Ascending aorta (tissue), 2 donors: ENCODE measurements at regions of chr1 and their contacts with region 1.

Region 1: DNA sequence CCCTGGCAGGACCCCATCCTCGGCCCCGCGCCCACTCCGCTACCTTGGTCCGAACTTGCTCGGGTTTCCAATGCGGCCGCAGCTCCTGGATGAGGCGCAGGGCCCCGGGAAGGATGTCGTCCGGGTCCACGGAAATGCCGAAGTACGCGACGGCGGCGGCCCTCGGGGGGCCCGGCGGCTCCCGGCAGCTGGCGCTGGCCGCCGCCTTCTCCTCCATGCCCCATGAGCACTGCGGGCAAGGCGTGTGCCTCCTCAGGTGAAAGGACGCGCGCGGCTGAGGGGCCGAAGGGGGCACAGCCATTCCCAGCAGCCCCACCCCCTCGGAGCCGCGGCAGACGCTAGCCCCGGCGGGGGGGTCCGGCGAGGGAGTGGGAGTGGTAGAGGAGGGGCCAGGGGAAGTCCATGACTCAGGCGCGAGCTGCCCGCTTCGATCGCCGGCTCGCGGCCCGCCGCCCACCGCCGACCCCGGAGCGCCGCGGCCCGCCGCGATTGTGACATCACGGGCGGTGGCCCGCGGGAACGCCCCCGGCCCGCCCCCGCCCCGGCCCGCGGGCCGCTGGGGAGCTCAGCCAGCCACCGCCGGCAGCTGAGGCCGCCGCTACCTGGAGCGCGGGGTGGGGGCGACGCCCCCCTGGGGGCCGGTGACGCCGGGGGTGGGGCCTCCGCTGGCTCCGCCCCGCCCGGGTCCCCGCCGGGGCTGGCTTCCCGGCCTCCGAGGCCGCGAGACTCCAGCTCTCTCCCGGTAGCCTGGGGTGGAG is at the start of gene ETNK2:
- DNase-seq: peak; percentile 35 to 87
- H3K4me3 ChIP-seq: peak within 1 kb of the TSS; percentile 89 to 90
- H3K27ac ChIP-seq: peak within 1 kb of the TSS; percentile 88 to 94
- H3K4me1 ChIP-seq: peaks cover 0 to 8% of the 10 kb centered on the region in 2 donors
- H3K27me3 ChIP-seq: no peaks in the 10 kb centered on the region
- CTCF ChIP-seq: no peak
- total RNA-seq, gene ETNK2: 22.0 TPM

Region 2: GRCh38 chr1:204080163-204080903 is 71.4 kb before region 1 on chr1:
- intact Hi-C with region 1: loop called (anchors 2 kb)
- DNase-seq: peak; percentile 56 to 95
- H3K4me3 ChIP-seq: peak overlapping the region; percentile 7 to 24
- H3K27ac ChIP-seq: peak overlapping the region; percentile 69 to 86
- H3K4me1 ChIP-seq: peaks cover 17 to 64% of the 10 kb centered on the region in 2 donors
- H3K27me3 ChIP-seq: no peaks in the 10 kb centered on the region
- CTCF ChIP-seq: no peak

Region 3: GRCh38 chr1:204128964-204129896 is 22.5 kb before region 1 on chr1:
- intact Hi-C with region 1: loop called (anchors 2 kb)
- DNase-seq: peak in 1 of 2 donors; percentile 79
- H3K4me3 ChIP-seq: peak overlapping the region; percentile 46 to 49
- H3K27ac ChIP-seq: peak overlapping the region; percentile 25 to 58
- H3K4me1 ChIP-seq: peaks cover 0 to 23% of the 10 kb centered on the region in 2 donors
- H3K27me3 ChIP-seq: no peaks in the 10 kb centered on the region
- CTCF ChIP-seq: peak; percentile 91 to 92 (median 91)

Region 4: DNA sequence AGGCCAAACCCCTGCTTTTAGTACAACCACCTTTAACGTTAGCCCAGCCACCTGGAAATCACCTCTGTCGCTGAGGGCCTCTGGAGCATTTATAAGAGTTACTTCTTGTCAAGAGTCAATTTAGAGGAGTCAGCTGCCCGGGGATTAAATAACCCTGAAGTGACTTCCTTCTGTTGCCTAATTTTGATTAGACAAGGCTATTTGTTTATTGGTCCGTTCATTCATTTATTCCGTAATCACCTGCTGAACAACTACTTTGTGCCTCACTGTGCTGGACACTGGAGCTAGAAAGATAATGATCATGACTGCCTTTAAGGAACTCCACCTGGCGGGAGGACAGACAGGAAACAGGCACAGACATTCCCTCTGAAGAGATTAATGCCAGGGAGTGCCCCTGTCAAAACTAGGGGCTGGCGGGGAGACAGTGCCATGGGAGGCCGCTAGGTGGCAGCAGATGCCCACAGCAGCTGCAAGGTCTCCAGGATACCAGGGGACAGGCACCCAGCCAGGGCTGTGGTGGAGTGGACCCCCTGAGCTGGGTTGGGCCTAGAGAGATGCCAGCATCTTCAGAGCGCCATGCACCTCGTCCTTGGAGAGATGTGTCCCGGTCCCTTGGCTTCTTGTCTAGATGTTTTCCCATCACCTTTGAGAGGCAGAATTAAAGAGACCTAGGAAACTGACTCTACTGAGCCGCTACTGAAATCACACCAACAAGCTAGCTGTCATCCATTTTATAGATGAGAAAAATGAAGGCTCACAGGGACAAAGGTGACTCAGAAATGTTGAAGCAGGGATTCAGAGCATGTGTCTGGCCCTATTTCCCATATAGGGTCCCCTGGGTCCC is 10.7 kb after region 1 on chr1:
- intact Hi-C with region 1: no loop called
- DNase-seq: peak in 1 of 2 donors; percentile 84
- H3K4me3 ChIP-seq: no peak overlapping the region
- H3K27ac ChIP-seq: no peak overlapping the region
- H3K4me1 ChIP-seq: no peaks in the 10 kb centered on the region
- H3K27me3 ChIP-seq: no peaks in the 10 kb centered on the region
- CTCF ChIP-seq: peak; percentile 87 to 99 (median 92)